Ovary (tissue), 10 donors: ENCODE measurements at regions of chr17 and their contacts with region 1.

Region 1: DNA sequence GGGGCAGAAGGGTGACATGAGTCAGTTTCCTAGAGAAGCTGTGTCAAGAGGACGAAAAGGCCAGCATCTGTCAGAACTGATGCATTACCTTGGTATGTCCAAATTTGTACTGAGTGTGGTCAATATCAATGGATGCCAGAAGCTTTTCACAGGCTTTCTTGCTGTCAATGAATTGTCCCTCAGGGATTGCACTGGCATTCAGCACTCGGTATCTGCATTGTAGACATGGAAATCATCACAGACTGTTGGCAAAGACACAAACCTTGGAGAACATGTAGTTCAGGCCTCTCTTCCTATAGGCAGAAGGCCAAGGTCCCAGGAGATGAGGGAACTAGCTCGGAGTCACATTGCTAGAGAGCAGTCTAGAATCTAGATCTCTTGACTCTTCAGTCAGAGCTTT is 16.6 kb downstream of the MYH3 start:
- DNase-seq: no peak
- H3K4me3 ChIP-seq: no peak overlapping the region
- H3K27ac ChIP-seq: no peak overlapping the region
- H3K4me1 ChIP-seq: no peaks in the 10 kb centered on the region
- H3K27me3 ChIP-seq: no peaks in the 10 kb centered on the region
- CTCF ChIP-seq: no peak
- EP300 ChIP-seq: no peak
- POLR2A ChIP-seq: no peak

Region 2: DNA sequence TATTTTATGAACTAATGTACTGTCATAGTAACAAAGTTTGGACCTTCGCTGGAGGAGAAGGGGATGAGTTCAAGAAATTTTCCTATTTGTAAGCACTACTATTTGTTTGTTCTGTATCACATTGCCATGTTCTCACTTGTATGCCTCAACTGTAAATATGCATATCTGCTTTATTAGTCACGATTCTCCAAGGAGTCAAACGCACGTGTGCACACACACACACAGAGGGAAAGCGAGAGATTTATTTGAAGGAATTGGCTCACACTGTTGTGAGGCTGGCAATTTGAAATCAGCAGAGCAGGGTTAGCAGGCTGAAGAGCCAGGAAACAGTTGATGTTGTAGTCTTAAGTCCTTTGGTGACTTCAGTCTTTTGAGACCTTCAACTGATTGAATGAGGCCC is 66.2 kb before region 1 on chr17:
- intact Hi-C with region 1: no loop called
- DNase-seq: no peak
- H3K4me3 ChIP-seq: no peak overlapping the region
- H3K27ac ChIP-seq: no peak overlapping the region
- H3K4me1 ChIP-seq: no peaks in the 10 kb centered on the region
- H3K27me3 ChIP-seq: no peaks in the 10 kb centered on the region
- CTCF ChIP-seq: no peak
- EP300 ChIP-seq: no peak
- POLR2A ChIP-seq: no peak

Region 3: GRCh38 chr17:10600571-10600970 is 39.9 kb before region 1 on chr17:
- intact Hi-C with region 1: no loop called
- DNase-seq: no peak
- H3K4me3 ChIP-seq: no peak overlapping the region
- H3K27ac ChIP-seq: no peak overlapping the region
- H3K4me1 ChIP-seq: no peaks in the 10 kb centered on the region
- H3K27me3 ChIP-seq: no peaks in the 10 kb centered on the region
- CTCF ChIP-seq: no peak
- EP300 ChIP-seq: no peak
- POLR2A ChIP-seq: no peak

Region 4: GRCh38 chr17:10836966-10837590 is 196.6 kb after region 1 on chr17:
- intact Hi-C with region 1: loop called in 2 of 4 experiments (anchors 5 to 10 kb)
- DNase-seq: no peak
- H3K4me3 ChIP-seq: no peak overlapping the region
- H3K27ac ChIP-seq: no peak overlapping the region
- H3K4me1 ChIP-seq: no peaks in the 10 kb centered on the region
- H3K27me3 ChIP-seq: no peaks in the 10 kb centered on the region
- CTCF ChIP-seq: no peak
- EP300 ChIP-seq: no peak
- POLR2A ChIP-seq: no peak